ENCODE measurements at regions of chr9 and their contacts with region 1.

Region 1: DNA sequence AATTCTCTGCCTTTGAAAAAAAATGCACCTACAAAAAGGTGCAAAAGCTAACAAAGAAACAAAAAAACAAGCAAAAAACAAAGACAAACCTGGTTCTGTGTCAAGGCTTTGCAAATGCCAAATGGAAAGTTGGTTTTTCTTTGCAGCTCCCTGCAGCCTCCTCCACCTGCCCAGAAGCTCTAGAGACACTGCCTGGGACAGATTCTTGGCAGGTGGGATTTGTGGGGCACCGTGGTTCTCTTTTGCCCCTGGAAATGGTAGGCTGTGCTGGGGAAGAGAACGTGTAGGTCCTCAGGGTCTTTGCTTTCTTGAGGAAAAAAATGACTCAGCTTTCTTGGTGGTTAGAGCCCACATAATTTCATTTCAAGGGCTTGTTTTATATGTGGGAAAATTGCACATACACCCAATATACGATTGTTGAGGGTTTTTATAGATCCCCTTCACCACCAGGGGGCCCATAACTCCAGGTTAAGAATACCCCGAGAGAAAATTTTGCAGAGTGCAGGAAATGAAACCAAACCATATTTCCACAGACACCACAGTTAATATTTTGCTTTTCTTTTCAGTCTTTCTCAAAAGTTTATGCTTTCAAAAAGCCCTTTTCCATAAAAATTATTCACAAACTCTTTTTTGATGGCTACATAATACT is 58.7 kb downstream of the NXNL2 start:
- DNase-seq: peak; percentile 59
- H3K4me3 ChIP-seq: no peak overlapping the region
- H3K27ac ChIP-seq: no peak overlapping the region
- H3K4me1 ChIP-seq: peaks cover 2% of the 10 kb centered on the region
- H3K27me3 ChIP-seq: no peaks in the 10 kb centered on the region
- CTCF ChIP-seq: peak in 3 of 4 experiments; percentile 73 to 83 (median 77)
- POLR2A ChIP-seq: no peak

Region 2: GRCh38 chr9:89000973-89001916 is 407.6 kb after region 1 on chr9:
- intact Hi-C with region 1: loop called (anchors 1 kb)
- DNase-seq: peak; percentile 85
- H3K4me3 ChIP-seq: peak overlapping the region in 1 of 2 donors; percentile 9
- H3K27ac ChIP-seq: peak overlapping the region; percentile 43 to 48
- H3K4me1 ChIP-seq: no peaks in the 10 kb centered on the region
- H3K27me3 ChIP-seq: no peaks in the 10 kb centered on the region
- CTCF ChIP-seq: peak; percentile 75 to 89 (median 86)
- POLR2A ChIP-seq: no peak